ENCODE measurements at regions of chr3 and their contacts with region 1.

Region 1: GRCh38 chr3:90015688-90016356 is 908.4 kb downstream of the EPHA3 start:
- DNase-seq: peak in 4 of 5 donors; percentile 24 to 34 (median 32)
- ATAC-seq: peak; percentile 39 to 80 (median 62)
- H3K4me3 ChIP-seq: no peak overlapping the region
- H3K27ac ChIP-seq: peak overlapping the region in 10 of 12 donors; percentile 1 to 68 (median 42)
- H3K4me1 ChIP-seq: peaks cover 0 to 16% (median 0%) of the 10 kb centered on the region in 12 donors
- H3K27me3 ChIP-seq: no peaks in the 10 kb centered on the region
- CTCF ChIP-seq: no peak
- POLR2A ChIP-seq: no peak

Region 2: DNA sequence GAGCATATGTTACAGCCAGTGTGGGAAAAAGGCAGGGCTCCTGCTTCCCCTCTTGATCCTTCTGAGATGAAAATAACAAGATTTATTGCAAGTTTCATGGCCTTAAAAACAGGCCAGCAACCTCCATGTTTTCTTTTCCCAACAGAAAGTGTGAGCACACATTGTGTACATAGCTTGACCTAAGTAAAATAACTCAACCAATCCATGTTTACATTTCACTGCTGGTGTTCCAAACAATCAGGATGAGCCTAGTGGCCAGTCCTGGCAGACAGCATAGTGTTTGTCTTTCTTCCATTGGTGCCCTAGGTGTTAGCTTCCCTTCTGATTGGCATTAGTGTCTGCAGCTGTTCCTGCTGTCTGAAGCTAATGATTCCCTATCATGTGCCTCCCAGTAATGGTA is 60.7 kb before region 1 on chr3:
- intact Hi-C with region 1: loop called in 1 of 10 experiments (anchors 10 kb)
- DNase-seq: no peak
- ATAC-seq: no peak
- H3K4me3 ChIP-seq: no peak overlapping the region
- H3K27ac ChIP-seq: peak overlapping the region in 1 of 12 donors; percentile 20
- H3K4me1 ChIP-seq: no peaks in the 10 kb centered on the region
- H3K27me3 ChIP-seq: no peaks in the 10 kb centered on the region
- CTCF ChIP-seq: no peak
- POLR2A ChIP-seq: no peak

Measured in heart left ventricle (tissue), 16 donors.